ENCODE measurements at regions of chr5 and their contacts with region 1.

Region 1: DNA sequence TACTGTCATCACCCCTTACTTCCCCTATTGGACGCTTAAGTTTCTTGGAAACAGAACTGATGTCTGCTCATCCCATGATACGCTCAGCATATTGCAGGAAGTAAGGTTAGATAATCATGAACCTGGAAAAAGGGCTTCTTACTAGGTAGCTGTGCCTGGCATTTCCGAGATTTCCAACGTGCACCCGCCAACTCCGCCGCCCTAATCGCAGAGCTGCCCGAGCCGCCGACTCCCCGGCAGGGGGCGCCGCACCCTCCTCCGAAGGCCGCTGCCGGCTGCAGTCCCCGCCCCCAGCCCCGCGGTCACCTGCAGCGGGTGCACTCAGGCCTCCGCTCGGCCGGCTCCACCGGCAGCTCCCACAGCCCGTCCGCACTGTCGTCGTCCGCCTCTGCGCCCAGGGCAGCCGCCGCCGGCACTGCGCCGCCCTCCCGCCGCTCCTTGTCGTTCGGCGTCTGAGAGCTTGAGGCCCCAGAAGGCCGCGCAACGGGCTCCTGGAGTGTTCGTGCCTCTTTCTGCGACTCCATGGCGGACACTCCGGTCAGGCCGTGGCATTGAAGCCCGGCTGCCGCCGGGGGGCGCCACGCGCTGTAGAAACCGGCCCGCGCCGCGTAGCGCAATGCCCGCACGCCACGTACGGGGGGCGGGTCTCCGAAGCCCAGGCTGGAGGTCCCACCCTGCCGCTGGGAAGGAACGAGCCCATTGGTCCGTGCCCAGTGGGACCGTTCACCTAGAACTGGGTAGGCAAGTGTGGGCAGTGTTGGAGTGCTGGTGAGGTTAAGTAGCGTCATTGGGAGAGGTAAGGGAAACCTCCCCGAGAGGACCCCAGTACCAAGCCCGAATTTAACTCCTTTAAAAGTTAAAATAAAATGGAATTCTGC is at the start of gene DTWD2:
- DNase-seq: peak; percentile 95
- ATAC-seq: peak; percentile 99
- H3K4me3 Mint-ChIP-seq: peak within 1 kb of the TSS; percentile 67
- H3K27ac Mint-ChIP-seq: peak within 1 kb of the TSS; percentile 53
- H3K4me1 Mint-ChIP-seq: peaks cover 14% of the 10 kb centered on the region
- H3K27me3 Mint-ChIP-seq: no peaks in the 10 kb centered on the region; the same call in 1 of the 2 replicates
- CTCF ChIP-seq: peak; percentile 85
- total RNA-seq, gene DTWD2: 10.3 to 13.1 TPM (median 10.4 TPM) in 3 replicates

Region 2: DNA sequence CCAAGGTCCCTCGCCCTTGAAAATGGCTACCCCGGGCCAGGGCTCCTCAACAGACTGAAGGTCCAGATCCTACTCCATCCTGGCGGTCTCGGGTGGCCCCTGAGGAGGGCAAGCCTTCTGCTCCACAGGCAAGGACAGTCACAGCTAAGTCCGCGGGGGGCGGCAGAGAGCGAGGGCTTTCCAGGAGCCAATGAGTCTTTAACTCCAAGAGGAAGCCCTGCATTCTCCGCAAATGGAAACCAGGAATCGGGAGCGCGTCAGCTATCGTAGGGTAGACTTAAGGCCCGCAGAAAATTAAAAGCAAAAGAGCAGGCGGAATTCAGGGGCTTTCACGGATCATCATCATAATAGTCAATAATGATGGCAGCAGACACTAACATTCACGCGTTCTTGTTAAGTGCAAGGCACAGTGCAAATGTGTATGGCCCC is 279.7 kb after region 1 on chr5:
- CTCF ChIA-PET with region 1: interaction called, 15 read pairs
- POLR2A ChIA-PET with region 1: interaction called, 3 read pairs
- DNase-seq: peak; percentile 90
- ATAC-seq: peak; percentile 74
- H3K4me3 Mint-ChIP-seq: peak overlapping the region; percentile 96
- H3K27ac Mint-ChIP-seq: peak overlapping the region; percentile 86
- H3K4me1 Mint-ChIP-seq: peaks cover 28% of the 10 kb centered on the region
- H3K27me3 Mint-ChIP-seq: peaks cover 23% of the 10 kb centered on the region
- CTCF ChIP-seq: no peak

Measured in WTC11 (cell line).